Activated T-helper 1 cell treated with anti-CD3 and anti-CD28 coated beads, Interleukin-12 subunit alpha, Interleukin-12 subunit beta, Interleukin-2, Interleukin-4 antibody, amounts not matched to agents 30 ng/mL and 10 ng/mL and 1 ng/mL, durations not matched to agents 14 hours and 24 hours and 36 hours (primary cell): ENCODE measurements at regions of chr11 and their contacts with region 1.

Region 1: GRCh38 chr11:36376888-36377758 is 81.0 kb downstream of the PRR5L start:
- DNase-seq: peak; percentile 63
- H3K4me3 Mint-ChIP-seq: peak overlapping the region; percentile 97
- H3K27ac Mint-ChIP-seq: peak overlapping the region; percentile 88
- H3K4me1 Mint-ChIP-seq: peaks cover 61% of the 10 kb centered on the region
- H3K27me3 Mint-ChIP-seq: peaks cover 33% of the 10 kb centered on the region

Region 2: DNA sequence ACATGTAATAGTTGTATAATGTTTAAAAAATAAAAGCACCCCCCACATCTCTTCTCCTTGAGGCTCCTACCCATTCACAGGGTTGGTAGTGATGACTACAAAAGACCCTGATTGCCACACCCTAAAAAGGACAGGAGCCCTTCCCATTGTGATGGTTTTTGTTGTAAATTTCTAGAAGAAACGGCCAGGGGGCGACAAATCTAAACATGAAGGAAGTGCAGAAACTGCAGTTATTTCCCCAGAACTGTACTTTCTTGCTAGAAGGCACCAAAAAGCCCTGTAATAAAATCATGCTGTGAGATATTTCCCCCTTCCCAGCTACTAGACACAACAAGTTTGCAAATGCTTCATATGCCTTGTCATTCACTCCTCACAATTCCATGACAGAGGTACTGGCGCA is 70.2 kb before region 1 on chr11:
- intact Hi-C with region 1: loop called (anchors 1 kb)
- DNase-seq: no peak
- H3K4me3 Mint-ChIP-seq: no peak overlapping the region
- H3K27ac Mint-ChIP-seq: no peak overlapping the region
- H3K4me1 Mint-ChIP-seq: peaks cover 9% of the 10 kb centered on the region
- H3K27me3 Mint-ChIP-seq: peaks cover 6% of the 10 kb centered on the region

Region 3: GRCh38 chr11:36390963-36391471 is 13.9 kb after region 1 on chr11:
- intact Hi-C with region 1: loop called (anchors 1 kb)
- DNase-seq: no peak
- H3K4me3 Mint-ChIP-seq: peak overlapping the region; percentile 40
- H3K27ac Mint-ChIP-seq: peak overlapping the region; percentile 66
- H3K4me1 Mint-ChIP-seq: peaks cover 86% of the 10 kb centered on the region
- H3K27me3 Mint-ChIP-seq: no peaks in the 10 kb centered on the region

Region 4: DNA sequence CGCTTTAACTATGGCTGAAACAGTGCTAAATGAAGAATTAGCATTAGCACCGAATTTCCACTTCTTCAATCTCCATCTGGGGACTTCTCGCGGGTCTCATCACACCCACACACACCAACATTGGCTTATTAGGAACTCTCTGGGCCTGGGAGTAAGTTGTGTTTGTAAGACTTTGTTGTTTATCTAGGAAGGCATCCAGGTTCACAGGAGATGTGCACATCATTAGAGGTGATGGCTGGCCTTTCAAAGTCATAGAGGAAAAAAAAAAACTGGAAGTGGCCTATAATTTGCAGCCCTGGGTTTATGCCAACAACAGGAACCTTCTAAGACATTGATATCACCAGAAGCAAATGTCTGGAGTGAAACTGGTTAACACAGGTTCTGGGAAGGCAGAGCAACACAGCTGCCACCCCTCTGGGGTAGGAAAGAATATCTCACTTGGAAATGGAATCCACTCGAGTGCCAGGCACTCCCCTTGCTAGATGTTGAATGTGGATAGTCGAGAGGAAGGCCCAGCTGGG is 48.5 kb after region 1 on chr11:
- intact Hi-C with region 1: loop called (anchors 1 kb)
- DNase-seq: no peak
- H3K4me3 Mint-ChIP-seq: no peak overlapping the region
- H3K27ac Mint-ChIP-seq: peak overlapping the region; percentile 25
- H3K4me1 Mint-ChIP-seq: peaks cover 62% of the 10 kb centered on the region
- H3K27me3 Mint-ChIP-seq: no peaks in the 10 kb centered on the region

Region 5: GRCh38 chr11:36450110-36450572 is 73.0 kb after region 1 on chr11:
- intact Hi-C with region 1: loop called (anchors 2 kb)
- DNase-seq: no peak
- H3K4me3 Mint-ChIP-seq: peak overlapping the region; percentile 12
- H3K27ac Mint-ChIP-seq: no peak overlapping the region
- H3K4me1 Mint-ChIP-seq: peaks cover 49% of the 10 kb centered on the region
- H3K27me3 Mint-ChIP-seq: no peaks in the 10 kb centered on the region

Region 6: GRCh38 chr11:36492724-36493304 is 115.7 kb after region 1 on chr11:
- intact Hi-C with region 1: loop called (anchors 1 kb)
- DNase-seq: no peak
- H3K4me3 Mint-ChIP-seq: no peak overlapping the region
- H3K27ac Mint-ChIP-seq: no peak overlapping the region
- H3K4me1 Mint-ChIP-seq: peaks cover 18% of the 10 kb centered on the region
- H3K27me3 Mint-ChIP-seq: no peaks in the 10 kb centered on the region